Sciatic nerve (tissue), 2 donors: ENCODE measurements at regions of chr14 and their contacts with region 1.

Region 1: GRCh38 chr14:56333359-56334292 is 215.4 kb downstream of the PELI2 start:
- DNase-seq: no peak
- ATAC-seq: peak; percentile 62

Region 2: DNA sequence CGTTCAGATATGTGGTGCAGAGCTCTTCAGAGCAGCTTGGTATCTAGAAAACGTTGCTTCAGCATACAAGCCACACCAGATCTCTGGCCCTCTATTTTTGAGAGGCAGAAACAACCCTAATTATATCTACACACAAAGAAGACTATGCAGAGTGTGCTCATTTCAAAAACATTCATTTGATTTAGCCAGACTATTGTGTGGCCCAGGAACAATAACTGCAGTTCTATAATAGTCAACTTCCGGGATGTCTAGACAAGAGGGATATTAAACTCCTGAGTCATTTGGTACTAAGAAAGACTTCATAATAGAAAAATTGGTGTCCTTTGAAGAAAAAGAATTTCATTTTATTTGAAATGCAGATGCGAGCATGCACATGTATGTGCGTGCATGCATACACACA is 61.7 kb before region 1 on chr14:
- intact Hi-C with region 1: loop called (anchors 2 kb)
- DNase-seq: no peak
- ATAC-seq: no peak